GM12878 (cell line): ENCODE measurements at regions of chr3 and their contacts with region 1.

Region 1: DNA sequence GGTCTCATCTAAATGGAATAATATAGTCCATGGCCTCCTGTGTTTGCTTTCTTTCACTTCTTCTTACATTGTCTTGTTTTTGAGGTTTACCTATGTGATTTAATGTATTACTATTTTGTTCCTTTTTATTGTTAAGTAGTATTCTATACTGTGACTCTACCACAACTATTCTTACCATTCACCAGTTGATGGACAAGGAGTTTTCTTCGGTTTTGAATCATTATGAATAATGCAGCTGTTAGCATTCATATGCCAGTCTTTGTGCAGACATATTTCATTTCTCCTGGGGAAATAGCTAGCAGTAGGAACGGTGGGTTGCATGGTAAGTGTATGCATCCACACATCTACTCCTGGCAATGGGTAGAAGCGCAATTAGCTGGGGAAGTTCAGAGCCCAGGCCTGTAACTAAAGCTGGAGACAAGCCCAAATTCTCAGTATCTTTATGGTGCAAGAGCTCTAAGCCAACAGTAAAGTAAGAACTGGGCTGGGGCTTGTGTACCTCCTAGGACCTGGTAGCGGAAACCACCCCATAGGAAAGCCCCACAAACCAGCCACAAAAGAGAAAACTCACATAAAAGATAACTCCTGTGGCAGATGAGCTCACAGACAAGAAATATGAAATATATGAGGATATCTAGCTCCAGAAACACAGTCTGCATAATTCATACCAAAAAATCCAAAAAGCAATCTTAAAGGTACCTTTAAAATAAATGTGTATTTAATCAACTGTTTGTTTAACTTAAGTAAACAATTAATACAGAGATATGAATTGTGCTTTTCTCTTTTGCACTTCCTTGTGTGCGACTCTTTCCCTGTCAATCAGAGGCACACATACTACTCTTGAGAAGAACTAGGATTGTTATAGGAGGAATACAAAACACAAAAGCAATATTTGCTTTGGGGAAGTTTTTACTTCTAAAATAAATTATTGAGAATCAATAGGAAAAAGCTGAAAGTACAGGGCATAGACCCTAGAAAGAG is 2.7 kb upstream of the CSTA start:
- DNase-seq: no peak
- ATAC-seq: peak; percentile 92
- H3K4me3 ChIP-seq: no peak overlapping the region
- H3K27ac ChIP-seq: peak overlapping the region; percentile 84
- H3K4me1 ChIP-seq: peaks cover 37% of the 10 kb centered on the region
- H3K27me3 ChIP-seq: no peaks in the 10 kb centered on the region
- CTCF ChIP-seq: no peak
- EP300 ChIP-seq: no peak; a peak in 1 of 4 replicates
- POLR2A ChIP-seq: no peak
- RAD21 ChIP-seq: no peak

Region 2: DNA sequence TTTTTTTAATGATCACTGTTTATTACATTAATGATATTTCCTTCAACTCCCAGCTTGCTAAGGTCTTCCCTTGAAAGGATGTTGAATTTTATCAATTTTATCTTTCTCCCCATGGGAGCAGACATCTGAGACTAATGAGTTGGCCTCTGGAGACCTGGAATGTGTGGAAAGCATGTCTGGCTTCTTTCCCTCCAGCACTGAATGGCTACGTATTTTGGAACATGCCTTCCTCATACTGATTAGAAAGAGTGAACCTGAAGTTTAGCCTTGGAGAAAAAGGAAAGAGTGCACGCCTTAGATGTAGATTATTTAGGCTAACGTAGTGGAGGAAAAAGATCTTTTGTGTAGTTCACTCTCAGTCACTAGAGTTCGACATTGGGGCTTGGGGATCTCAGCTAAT is 113.8 kb before region 1 on chr3:
- CTCF ChIA-PET with region 1: no interaction called
- POLR2A ChIA-PET with region 1: no interaction called
- RAD21 ChIA-PET with region 1: no interaction called
- SMC1A ChIA-PET with region 1: no interaction called
- in situ Hi-C with region 1: no loop called
- intact Hi-C with region 1: no loop called
- DNase-seq: no peak
- ATAC-seq: no peak
- H3K4me3 ChIP-seq: no peak overlapping the region
- H3K27ac ChIP-seq: no peak overlapping the region
- H3K4me1 ChIP-seq: no peaks in the 10 kb centered on the region
- H3K27me3 ChIP-seq: no peaks in the 10 kb centered on the region
- CTCF ChIP-seq: no peak
- EP300 ChIP-seq: no peak
- POLR2A ChIP-seq: no peak
- RAD21 ChIP-seq: no peak

Region 3: DNA sequence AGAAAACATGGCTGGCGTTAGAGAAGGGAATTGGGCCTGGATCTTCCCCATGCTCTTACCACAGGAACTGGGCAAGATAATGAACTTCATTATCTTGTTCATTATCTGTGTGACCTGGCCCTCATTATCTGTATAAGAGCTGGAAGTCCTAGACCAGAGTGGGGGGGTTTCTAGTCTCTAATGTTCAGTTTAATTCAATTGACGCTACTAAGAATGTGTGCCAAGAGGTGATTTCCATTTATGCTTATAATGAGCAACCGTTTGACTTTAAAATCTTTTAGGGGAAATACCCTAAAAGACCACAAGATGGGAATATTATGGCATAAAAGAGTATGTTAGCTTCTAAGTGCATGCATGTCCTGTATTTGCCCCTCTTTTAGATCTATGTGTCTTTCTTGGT is 56.4 kb before region 1 on chr3:
- CTCF ChIA-PET with region 1: interaction called, 5 read pairs
- POLR2A ChIA-PET with region 1: interaction called, 4 read pairs
- RAD21 ChIA-PET with region 1: interaction called, 7 read pairs
- SMC1A ChIA-PET with region 1: interaction called, 12 read pairs
- in situ Hi-C with region 1: no loop called
- intact Hi-C with region 1: no loop called
- DNase-seq: no peak
- ATAC-seq: peak; percentile 11; the same call in 2 of the 3 replicates
- H3K4me3 ChIP-seq: no peak overlapping the region
- H3K27ac ChIP-seq: peak overlapping the region; percentile 43; the same call in 1 of the 2 replicates
- H3K4me1 ChIP-seq: peaks cover 26% of the 10 kb centered on the region
- H3K27me3 ChIP-seq: no peaks in the 10 kb centered on the region
- CTCF ChIP-seq: 0 out of 6 replicates have a peak, but pooled peaks of 1 of the 3 experiments have one; percentile 3
- EP300 ChIP-seq: 0 out of 4 replicates have a peak, but pooled peaks of 1 of the 2 experiments have one; percentile 11
- POLR2A ChIP-seq: no peak
- RAD21 ChIP-seq: peak; percentile 38; the same call in 1 of the 2 replicates

Region 4: DNA sequence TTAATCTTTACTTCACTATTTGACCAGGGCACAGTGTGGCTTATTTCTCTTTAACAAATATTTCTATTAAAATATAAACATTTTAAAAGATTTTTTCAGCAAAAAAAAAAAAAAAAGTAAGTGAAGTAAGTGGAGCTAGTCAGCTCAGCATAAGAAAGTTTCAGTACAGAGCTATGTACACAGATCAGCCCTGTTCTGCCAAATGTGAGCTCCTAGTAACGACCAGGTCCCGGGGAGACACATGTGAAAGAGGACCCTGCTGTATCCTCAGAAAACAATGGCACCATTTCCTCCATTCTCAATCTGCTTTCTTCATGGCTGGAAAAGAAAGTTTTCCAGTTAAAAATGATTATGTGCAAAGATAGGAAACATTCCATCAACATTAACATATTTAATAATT is 16.0 kb after region 1 on chr3:
- CTCF ChIA-PET with region 1: interaction called, 9 read pairs
- POLR2A ChIA-PET with region 1: interaction called, 7 read pairs
- RAD21 ChIA-PET with region 1: interaction called, 3 read pairs
- SMC1A ChIA-PET with region 1: interaction called, 13 read pairs
- in situ Hi-C with region 1: no loop called
- intact Hi-C with region 1: no loop called
- DNase-seq: no peak
- ATAC-seq: no peak
- H3K4me3 ChIP-seq: no peak overlapping the region
- H3K27ac ChIP-seq: no peak overlapping the region
- H3K4me1 ChIP-seq: no peaks in the 10 kb centered on the region
- H3K27me3 ChIP-seq: no peaks in the 10 kb centered on the region
- CTCF ChIP-seq: no peak
- EP300 ChIP-seq: no peak
- POLR2A ChIP-seq: no peak
- RAD21 ChIP-seq: no peak

Region 5: GRCh38 chr3:122350814-122351418 is 28.5 kb after region 1 on chr3:
- CTCF ChIA-PET with region 1: interaction called, 14 read pairs
- POLR2A ChIA-PET with region 1: interaction called, 3 read pairs
- RAD21 ChIA-PET with region 1: interaction called, 10 read pairs
- SMC1A ChIA-PET with region 1: interaction called, 50 read pairs
- in situ Hi-C with region 1: no loop called
- intact Hi-C with region 1: no loop called
- DNase-seq: no peak
- ATAC-seq: no peak
- H3K4me3 ChIP-seq: no peak overlapping the region
- H3K27ac ChIP-seq: no peak overlapping the region
- H3K4me1 ChIP-seq: no peaks in the 10 kb centered on the region
- H3K27me3 ChIP-seq: no peaks in the 10 kb centered on the region
- CTCF ChIP-seq: no peak
- EP300 ChIP-seq: no peak
- POLR2A ChIP-seq: no peak
- RAD21 ChIP-seq: no peak

Region 6: DNA sequence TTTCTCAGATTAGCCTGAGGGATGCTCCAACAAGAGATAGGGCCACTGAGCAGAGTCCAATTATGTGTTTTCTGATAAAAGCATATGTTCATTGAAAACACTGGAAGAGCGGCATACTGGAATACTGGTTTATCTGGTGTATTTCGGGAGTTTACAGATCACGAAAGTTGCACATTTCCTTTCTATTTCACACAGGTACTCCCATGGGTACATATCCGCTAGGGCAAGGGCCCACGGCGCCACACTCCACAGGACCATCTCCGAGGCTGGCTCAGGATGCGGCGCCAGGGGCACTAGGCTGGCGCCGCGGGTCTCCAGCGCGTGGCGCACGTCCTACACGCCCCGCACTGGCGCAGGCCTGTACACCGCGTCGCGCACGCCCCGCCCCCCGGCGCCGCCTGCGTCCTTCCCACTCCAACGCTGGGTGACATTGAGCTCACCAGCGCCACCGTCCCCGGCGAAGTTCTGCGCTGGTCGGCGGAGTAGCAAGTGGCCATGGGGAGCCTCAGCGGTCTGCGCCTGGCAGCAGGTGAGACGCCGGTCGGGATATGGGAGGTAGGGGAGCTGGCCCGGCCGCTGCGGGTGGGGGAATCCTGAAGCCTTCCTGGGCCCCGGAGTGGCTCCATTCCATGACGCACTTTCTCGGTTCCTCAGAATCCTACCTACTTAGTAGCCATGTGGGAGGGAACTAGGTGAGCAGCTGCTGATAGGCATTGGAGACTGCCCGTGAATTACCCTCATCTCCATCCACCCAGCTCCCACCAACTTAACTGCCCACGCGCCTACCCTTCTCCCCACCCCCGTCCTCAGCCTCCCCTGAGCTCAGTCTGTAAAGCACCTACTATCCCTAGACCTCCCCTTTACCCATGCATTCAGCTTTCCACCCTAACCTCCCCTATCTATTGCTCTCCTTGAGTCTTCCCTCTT is 61.6 kb after region 1 on chr3 and contains the start of gene FAM162A:
- CTCF ChIA-PET with region 1: interaction called, 5 read pairs
- POLR2A ChIA-PET with region 1: interaction called, 12 read pairs
- RAD21 ChIA-PET with region 1: interaction called, 12 read pairs
- SMC1A ChIA-PET with region 1: interaction called, 6 read pairs
- in situ Hi-C with region 1: no loop called
- intact Hi-C with region 1: no loop called
- DNase-seq: peak; percentile 83
- ATAC-seq: peak; percentile 95
- H3K4me3 ChIP-seq: peak within 1 kb of the TSS; percentile 76
- H3K27ac ChIP-seq: peak within 1 kb of the TSS; percentile 82
- H3K4me1 ChIP-seq: peaks cover 16% of the 10 kb centered on the region
- H3K27me3 ChIP-seq: no peaks in the 10 kb centered on the region
- CTCF ChIP-seq: peak; percentile 55 to 77 (median 61); a peak in 5 of 6 replicates
- EP300 ChIP-seq: peak in 1 of 2 experiments; percentile 8; a peak in 1 of 4 replicates
- POLR2A ChIP-seq: peak; percentile 96
- RAD21 ChIP-seq: peak; percentile 38
- polyA plus RNA-seq, gene FAM162A: 290 to 297 TPM